GM18951 (cell line): ENCODE measurements at regions of chr18 and their contacts with region 1.

Region 1: GRCh38 chr18:2104620-2105462 is 466.5 kb downstream of the METTL4 start:
- POLR2A ChIP-seq: no peak

Region 2: DNA sequence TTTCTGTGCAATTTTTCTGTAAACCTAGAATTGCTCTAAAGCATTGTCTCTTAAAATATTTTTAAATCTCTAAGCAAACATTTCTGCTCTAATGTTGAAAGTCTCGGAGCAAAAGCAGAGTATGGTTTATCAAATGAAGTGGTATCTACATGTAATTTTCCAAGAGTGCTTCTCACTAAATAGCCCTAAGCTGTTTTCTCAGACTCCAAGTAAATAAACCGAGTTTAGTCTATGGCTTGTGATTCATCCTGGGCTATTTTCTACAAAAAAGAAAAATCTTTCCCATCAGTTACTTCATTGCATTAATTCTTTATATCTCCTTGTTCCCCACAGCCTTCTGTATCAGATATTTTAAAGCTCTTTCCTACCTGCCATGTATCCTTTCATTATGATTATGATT is 375.7 kb after region 1 on chr18:
- in situ Hi-C with region 1: no loop called
- POLR2A ChIP-seq: no peak

Region 3: DNA sequence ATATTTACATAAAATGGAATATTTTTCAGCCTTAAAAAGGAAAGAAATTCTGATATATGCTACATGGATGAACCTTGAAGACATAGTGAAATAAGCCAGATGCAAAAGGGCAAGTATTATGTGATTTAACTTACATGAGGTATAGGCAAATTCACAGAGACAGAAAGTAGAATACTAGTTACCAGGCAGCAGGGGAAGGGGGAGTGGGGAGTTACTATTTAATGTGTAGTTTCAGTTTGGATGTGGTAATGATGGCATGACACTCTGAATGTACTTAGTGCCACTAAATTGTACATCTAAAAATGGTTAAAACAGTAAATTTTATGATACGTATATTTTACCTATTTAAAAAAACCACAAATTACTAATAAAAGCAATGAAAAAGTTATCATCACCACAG is 454.4 kb after region 1 on chr18:
- in situ Hi-C with region 1: loop called (anchors 10 kb)
- POLR2A ChIP-seq: no peak